Calu3 (cell line): ENCODE measurements at regions of chr14 and their contacts with region 1.

Region 1: GRCh38 chr14:19878029-19878642 is 3.2 kb downstream of the OR4K2 start:
- DNase-seq: no peak
- H3K4me3 Mint-ChIP-seq: no peak overlapping the region
- H3K27ac Mint-ChIP-seq: no peak overlapping the region
- H3K4me1 Mint-ChIP-seq: no peaks in the 10 kb centered on the region
- H3K27me3 Mint-ChIP-seq: no peaks in the 10 kb centered on the region
- CTCF ChIP-seq: peak; percentile 32

Region 2: DNA sequence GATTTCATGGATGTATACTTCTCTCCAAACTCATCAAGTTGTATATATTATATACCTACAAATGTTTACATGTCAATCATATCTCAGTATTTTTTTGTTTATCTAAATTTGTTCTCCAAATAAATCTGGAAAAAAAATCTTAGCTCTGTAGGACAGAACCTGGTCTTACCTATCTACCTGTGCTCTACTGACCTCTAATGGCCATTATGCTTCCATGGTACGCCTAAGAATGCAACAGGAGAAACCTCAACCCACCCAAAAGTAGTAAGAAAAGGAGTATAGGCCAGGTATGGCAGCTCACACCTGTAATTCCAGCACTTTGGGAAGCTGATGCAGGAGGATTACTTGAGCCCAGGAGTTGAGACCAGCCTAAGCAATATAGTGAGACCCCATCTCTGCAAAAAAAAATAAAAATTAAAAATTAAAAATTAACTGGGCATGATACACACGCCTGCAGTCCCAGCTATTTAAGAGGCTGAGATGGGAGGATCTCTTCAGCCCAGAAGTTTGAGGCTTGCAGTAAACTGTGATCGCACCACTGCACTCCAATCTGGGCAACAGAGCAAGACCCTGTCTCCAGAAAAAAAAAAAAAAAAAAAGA is 369.6 kb after region 1 on chr14:
- CTCF ChIA-PET with region 1: no interaction called
- intact Hi-C with region 1: loop called (anchors 5 kb)
- DNase-seq: peak; percentile 10
- H3K4me3 Mint-ChIP-seq: no peak overlapping the region
- H3K27ac Mint-ChIP-seq: no peak overlapping the region
- H3K4me1 Mint-ChIP-seq: no peaks in the 10 kb centered on the region
- H3K27me3 Mint-ChIP-seq: no peaks in the 10 kb centered on the region
- CTCF ChIP-seq: no peak